ENCODE measurements at regions of chrX and their contacts with region 1.

Region 1: GRCh38 chrX:153897899-153898298 is 6.6 kb upstream of the AVPR2 start:
- DNase-seq: no peak
- ATAC-seq: no peak
- H3K4me3 ChIP-seq: no peak overlapping the region
- H3K27ac ChIP-seq: no peak overlapping the region
- H3K4me1 ChIP-seq: peaks cover 0 to 17% of the 10 kb centered on the region in 2 donors
- H3K27me3 ChIP-seq: no peaks in the 10 kb centered on the region
- CTCF ChIP-seq: no peak

Region 2: DNA sequence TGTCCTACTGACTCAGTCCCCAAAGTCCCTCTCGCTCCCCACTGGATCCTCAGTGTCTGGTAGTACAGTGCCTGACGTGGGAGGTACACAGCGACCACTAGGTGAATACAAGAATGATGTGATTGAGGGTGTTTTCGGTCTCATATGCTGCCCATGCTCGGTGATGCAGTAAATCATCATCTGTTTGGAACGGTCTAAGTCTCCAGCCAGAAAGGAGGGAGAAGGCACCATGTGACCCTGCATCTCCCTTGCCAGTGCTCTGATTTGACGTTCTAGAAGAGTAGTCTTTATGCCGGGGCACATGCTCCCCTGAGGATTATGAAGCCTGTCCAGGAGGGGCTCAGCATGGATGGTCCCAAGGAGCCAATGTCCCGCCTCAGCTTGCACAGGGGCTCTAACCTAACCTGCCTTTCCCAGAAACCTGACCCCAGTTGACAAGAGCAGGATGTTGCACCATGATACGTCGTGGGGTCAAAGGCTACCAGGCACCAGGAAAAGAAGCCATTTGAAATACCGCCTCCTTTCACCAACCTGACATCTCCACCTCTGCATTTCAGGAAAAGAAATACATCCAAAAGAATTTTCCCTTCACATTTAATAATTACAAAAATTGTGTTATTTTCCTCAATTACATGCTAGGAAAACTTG is 147.6 kb before region 1 on chrX:
- intact Hi-C with region 1: no loop called
- DNase-seq: no peak
- ATAC-seq: no peak
- H3K4me3 ChIP-seq: no peak overlapping the region
- H3K27ac ChIP-seq: no peak overlapping the region
- H3K4me1 ChIP-seq: no peaks in the 10 kb centered on the region
- H3K27me3 ChIP-seq: no peaks in the 10 kb centered on the region
- CTCF ChIP-seq: no peak

Region 3: DNA sequence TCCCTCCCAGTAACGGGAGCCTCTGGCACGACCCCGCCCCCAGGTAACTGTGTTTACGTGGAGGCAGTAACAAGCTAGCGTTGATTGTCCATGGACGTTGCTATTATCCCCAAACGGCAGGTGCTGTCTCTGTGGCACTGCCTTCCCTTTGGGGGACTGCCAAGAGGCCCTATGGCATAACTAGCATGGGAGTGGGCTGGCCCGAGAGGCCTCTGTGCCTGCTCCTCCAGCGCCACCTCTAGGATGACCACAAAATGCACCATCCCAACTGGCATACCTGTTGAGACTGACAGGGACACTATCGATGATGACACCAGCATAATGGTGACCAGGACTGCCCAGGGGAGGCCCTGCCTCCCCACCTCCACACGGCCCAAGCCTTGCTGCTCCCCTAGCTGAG is 115.6 kb before region 1 on chrX:
- intact Hi-C with region 1: no loop called
- DNase-seq: no peak
- ATAC-seq: no peak
- H3K4me3 ChIP-seq: no peak overlapping the region
- H3K27ac ChIP-seq: no peak overlapping the region
- H3K4me1 ChIP-seq: no peaks in the 10 kb centered on the region
- H3K27me3 ChIP-seq: peaks cover 0 to 37% of the 10 kb centered on the region in 2 donors
- CTCF ChIP-seq: no peak

Region 4: GRCh38 chrX:153829799-153830634 is 67.9 kb before region 1 on chrX and contains the start of gene PDZD4:
- intact Hi-C with region 1: loop called in 1 of 2 experiments (anchors 10 kb)
- DNase-seq: no peak
- ATAC-seq: no peak
- H3K4me3 ChIP-seq: peak within 1 kb of the TSS in 1 of 2 donors; percentile 26
- H3K27ac ChIP-seq: no peak within 1 kb of the TSS
- H3K4me1 ChIP-seq: peaks cover 7 to 8% of the 10 kb centered on the region in 2 donors
- H3K27me3 ChIP-seq: peaks cover 37 to 70% of the 10 kb centered on the region in 2 donors
- CTCF ChIP-seq: no peak
- polyA plus RNA-seq, gene PDZD4: 8.3 to 13.7 (median 10.9) TPM